PC-3 (cell line): ENCODE measurements at regions of chrX and their contacts with region 1.

Region 1: DNA sequence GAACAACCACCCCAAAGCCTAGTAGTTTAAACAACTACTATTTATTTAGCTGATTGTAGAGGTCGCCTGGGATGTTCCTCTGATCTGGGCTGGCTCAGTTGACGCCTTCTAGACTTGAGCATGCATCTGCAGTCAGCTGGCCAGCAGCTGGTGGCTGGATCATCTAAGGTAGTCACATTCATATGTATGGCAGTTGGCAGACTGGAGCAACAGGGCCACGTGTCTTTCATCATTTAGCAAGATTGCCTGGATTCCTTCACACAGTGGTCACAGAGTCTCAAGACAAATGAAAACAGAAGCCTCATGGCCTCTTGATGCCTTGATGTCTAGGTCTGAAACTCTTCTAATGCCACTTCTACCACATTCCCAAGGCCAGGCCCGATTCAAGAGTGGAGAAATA is 220.6 kb upstream of the S100G start:
- DNase-seq: no peak
- ATAC-seq: no peak
- H3K4me3 ChIP-seq: no peak overlapping the region
- H3K27ac ChIP-seq: no peak overlapping the region
- H3K4me1 ChIP-seq: no peaks in the 10 kb centered on the region
- H3K27me3 ChIP-seq: no peaks in the 10 kb centered on the region
- CTCF ChIP-seq: no peak

Region 2: DNA sequence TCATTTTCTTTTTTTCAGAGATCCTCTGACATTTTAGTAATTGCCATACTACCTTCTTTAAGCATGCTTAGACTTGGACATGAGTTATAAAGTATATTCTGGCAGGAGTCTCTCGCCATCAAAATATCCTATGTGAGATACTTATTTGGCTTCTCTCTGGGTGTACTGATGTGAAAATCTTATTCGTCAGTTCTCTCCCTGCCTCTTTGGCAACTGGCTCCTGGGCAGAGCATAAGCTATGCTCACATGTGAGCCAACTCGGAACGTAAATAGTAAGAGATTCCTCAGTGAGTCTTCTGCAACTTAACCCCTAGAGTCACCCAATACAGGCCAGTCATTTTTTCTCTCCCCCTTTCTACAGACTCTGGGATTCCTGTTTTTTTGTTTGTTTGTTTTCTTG is 170.5 kb before region 1 on chrX:
- CTCF ChIA-PET with region 1: no interaction called
- POLR2A ChIA-PET with region 1: no interaction called
- intact Hi-C with region 1: no loop called
- DNase-seq: no peak
- ATAC-seq: no peak
- H3K4me3 ChIP-seq: no peak overlapping the region
- H3K27ac ChIP-seq: no peak overlapping the region
- H3K4me1 ChIP-seq: no peaks in the 10 kb centered on the region
- H3K27me3 ChIP-seq: no peaks in the 10 kb centered on the region
- CTCF ChIP-seq: no peak

Region 3: DNA sequence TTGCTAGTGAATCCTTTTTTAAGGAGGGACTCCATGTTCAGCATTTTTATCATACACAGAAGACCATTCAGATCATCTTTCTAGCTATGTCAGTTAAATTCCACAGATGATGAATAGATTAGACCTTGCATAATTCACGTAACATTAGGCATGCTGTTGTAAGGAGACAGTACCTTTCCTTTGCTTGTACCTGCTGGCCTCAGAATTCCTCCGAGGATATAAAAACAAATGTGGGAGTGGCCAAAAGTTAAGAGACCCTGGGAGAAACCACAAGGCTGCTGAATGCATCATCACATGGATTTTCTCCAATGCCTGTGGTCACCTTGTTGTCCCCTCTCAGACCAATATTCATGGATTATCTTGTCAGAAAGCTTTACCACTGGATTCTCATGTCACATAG is 60.7 kb before region 1 on chrX:
- CTCF ChIA-PET with region 1: no interaction called
- POLR2A ChIA-PET with region 1: no interaction called
- intact Hi-C with region 1: no loop called
- DNase-seq: no peak
- ATAC-seq: no peak
- H3K4me3 ChIP-seq: no peak overlapping the region
- H3K27ac ChIP-seq: no peak overlapping the region
- H3K4me1 ChIP-seq: no peaks in the 10 kb centered on the region
- H3K27me3 ChIP-seq: no peaks in the 10 kb centered on the region
- CTCF ChIP-seq: no peak

Region 4: GRCh38 chrX:16797358-16797757 is 368.0 kb after region 1 on chrX:
- CTCF ChIA-PET with region 1: no interaction called
- POLR2A ChIA-PET with region 1: interaction called, 21 read pairs
- intact Hi-C with region 1: no loop called
- DNase-seq: no peak
- ATAC-seq: no peak
- H3K4me3 ChIP-seq: no peak overlapping the region
- H3K27ac ChIP-seq: no peak overlapping the region
- H3K4me1 ChIP-seq: no peaks in the 10 kb centered on the region
- H3K27me3 ChIP-seq: no peaks in the 10 kb centered on the region
- CTCF ChIP-seq: no peak

Region 5: DNA sequence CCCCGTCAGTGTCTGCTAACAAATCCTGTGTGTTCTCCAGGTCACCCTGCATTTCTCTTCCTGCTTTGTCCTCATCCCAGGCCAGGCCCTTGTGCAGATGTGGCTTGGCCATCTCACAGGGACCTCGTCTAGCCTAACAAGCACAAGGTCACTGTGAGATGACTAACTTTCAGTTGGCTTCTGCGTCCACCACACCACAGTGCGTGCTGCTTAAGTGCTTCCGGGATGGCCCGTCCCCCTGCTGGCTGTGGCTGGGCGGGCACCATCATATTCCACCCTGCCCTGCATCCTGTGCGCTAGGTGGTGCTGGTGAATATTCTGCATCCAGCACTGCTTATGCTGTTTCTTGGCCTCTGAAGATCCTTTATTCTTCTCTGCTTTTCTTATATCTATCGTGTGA is 407.0 kb after region 1 on chrX:
- CTCF ChIA-PET with region 1: no interaction called
- POLR2A ChIA-PET with region 1: no interaction called
- intact Hi-C with region 1: no loop called
- DNase-seq: peak; percentile 9
- ATAC-seq: peak; percentile 49; the same call in 1 of the 2 replicates
- H3K4me3 ChIP-seq: no peak overlapping the region
- H3K27ac ChIP-seq: no peak overlapping the region
- H3K4me1 ChIP-seq: 0 out of 2 replicates have a peak, but pooled peaks cover 3% of the 10 kb centered on the region
- H3K27me3 ChIP-seq: no peaks in the 10 kb centered on the region
- CTCF ChIP-seq: peak; percentile 51